ENCODE measurements at regions of chr10 and their contacts with region 1.

Region 1: GRCh38 chr10:27319752-27320561 is 79.4 kb upstream of the ACBD5 start:
- DNase-seq: peak; percentile 77

Region 2: GRCh38 chr10:26621889-26622711 is 697.9 kb before region 1 on chr10:
- intact Hi-C with region 1: loop called (anchors 10 kb)
- DNase-seq: peak; percentile 87